B cell (primary cell): ENCODE measurements at regions of chr9 and their contacts with region 1.

Region 1: DNA sequence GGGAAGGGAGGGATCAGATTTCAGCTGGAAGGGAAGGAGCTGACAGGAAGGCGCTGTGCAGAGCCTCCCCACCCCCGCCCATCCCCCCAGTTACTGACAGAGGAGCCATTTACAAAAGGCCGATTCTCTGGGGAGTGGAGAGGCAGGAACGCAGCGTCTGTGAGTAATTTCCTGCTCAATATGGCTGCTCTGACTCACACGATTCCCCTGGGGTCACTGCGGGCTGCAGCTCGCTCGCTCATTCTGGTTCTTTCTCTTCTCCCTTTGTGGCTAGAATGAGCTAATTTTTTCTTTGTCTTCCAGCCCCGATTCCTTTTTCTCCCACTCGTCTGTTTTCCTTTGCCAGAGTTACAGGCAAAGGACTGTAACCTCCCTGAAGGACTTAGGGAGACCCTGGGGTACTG is 28.8 kb downstream of the PTPA start:
- DNase-seq: peak; percentile 95
- ATAC-seq: peak; percentile 83
- H3K4me3 ChIP-seq: peak overlapping the region; percentile 43 to 64 (median 57)
- H3K4me3 Mint-ChIP-seq: peak overlapping the region; percentile 90
- H3K27ac ChIP-seq: peak overlapping the region; percentile 97 to 100
- H3K27ac Mint-ChIP-seq: peak overlapping the region; percentile 94
- H3K4me1 ChIP-seq: peaks cover 43 to 50% of the 10 kb centered on the region in 2 donors
- H3K4me1 Mint-ChIP-seq: peaks cover 47% of the 10 kb centered on the region
- H3K27me3 ChIP-seq: no peaks in the 10 kb centered on the region
- H3K27me3 Mint-ChIP-seq: no peaks in the 10 kb centered on the region
- CTCF ChIP-seq: no peak

Region 2: GRCh38 chr9:129080602-129081387 is 59.2 kb before region 1 on chr9 and contains the start of gene DOLPP1:
- CTCF ChIA-PET with region 1: interaction called, 3 read pairs
- POLR2A ChIA-PET with region 1: no interaction called
- intact Hi-C with region 1: loop called (anchors 2 kb)
- DNase-seq: peak; percentile 99
- ATAC-seq: peak; percentile 92
- H3K4me3 ChIP-seq: peak within 1 kb of the TSS; percentile 67 to 90 (median 75)
- H3K4me3 Mint-ChIP-seq: peak within 1 kb of the TSS; percentile 91
- H3K27ac ChIP-seq: peak within 1 kb of the TSS; percentile 42 to 79
- H3K27ac Mint-ChIP-seq: peak within 1 kb of the TSS; percentile 88
- H3K4me1 ChIP-seq: peaks cover 16 to 20% of the 10 kb centered on the region in 2 donors
- H3K4me1 Mint-ChIP-seq: peaks cover 23% of the 10 kb centered on the region
- H3K27me3 ChIP-seq: no peaks in the 10 kb centered on the region
- H3K27me3 Mint-ChIP-seq: no peaks in the 10 kb centered on the region
- CTCF ChIP-seq: no peak
- total RNA-seq, gene DOLPP1: 4.7 and 7.1 TPM in 2 replicates

Region 3: DNA sequence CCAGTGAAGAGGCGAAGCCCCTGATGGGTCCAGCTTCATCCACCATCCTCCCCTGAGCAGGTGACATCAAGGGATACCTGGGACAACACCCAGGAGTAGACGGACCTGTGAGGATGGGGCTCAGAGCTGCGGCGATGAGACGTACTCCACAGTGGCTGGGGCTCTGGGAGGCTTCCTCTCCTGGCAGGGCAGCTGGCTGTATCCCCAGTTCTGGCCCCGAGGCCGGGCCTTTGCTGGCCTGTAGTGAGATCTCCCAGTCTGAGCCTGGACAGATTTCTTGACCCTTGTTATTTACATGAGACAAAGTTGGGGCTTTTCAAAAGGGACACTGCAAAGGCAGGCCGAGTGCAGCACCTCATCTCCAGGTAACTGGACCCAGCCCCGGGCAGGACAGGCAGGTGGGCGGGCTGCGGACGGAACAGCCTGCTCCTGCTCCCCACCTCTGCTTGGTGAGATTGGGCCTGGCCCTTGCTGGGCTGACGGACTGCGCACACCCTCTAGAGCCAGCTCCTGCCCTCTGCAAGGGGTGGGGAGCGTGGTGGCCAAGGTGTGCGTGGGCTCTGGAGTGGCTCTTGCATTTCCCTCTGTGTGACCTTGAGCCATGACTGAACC is 15.0 kb after region 1 on chr9:
- CTCF ChIA-PET with region 1: interaction called, 24 read pairs
- POLR2A ChIA-PET with region 1: no interaction called
- intact Hi-C with region 1: no loop called
- DNase-seq: no peak
- ATAC-seq: no peak
- H3K4me3 ChIP-seq: no peak overlapping the region
- H3K4me3 Mint-ChIP-seq: no peak overlapping the region
- H3K27ac ChIP-seq: no peak overlapping the region
- H3K27ac Mint-ChIP-seq: no peak overlapping the region
- H3K4me1 ChIP-seq: no peaks in the 10 kb centered on the region
- H3K4me1 Mint-ChIP-seq: no peaks in the 10 kb centered on the region
- H3K27me3 ChIP-seq: no peaks in the 10 kb centered on the region
- H3K27me3 Mint-ChIP-seq: no peaks in the 10 kb centered on the region
- CTCF ChIP-seq: no peak

Region 4: DNA sequence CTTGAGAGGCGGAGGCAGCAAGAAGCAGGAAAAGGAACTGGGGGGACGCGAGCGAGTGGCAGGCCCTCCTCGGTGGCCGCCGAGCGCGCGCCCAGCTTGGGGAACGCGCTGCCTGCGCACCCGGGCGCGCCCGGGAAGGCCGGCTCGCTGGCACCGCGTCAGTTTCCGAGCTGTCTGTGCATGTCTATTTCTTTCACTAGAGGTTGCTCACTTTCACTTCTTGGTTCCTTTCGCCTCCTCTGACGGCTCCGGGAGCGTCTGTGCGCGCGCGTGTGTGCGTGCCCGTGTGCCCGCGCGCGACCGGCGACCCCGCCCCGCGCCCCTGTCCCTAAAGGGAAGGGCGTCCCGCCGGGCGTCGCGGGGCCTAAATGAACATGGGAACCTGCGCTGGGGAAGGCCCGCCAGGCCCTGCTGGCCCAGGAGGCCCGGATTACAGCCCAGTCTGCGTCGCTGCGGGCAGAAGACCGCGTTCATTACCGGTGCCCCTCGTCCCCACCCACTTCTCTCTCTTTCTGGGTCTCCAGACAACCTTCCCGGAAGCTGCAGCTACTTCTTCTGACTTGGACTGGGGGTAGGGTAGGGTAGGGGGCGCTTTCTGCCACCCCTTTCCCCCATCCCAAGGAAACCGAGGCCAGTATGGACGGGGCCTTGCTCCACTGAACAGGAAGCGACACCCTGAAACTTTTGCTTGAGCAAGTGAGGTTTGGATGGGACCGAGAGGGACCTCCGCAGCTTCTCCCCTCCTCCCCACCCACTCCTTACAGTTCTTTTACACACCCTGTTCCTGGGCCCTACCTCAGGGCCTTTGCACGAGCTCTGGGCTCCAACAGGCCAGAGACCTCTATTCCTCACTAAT is 243.8 kb after region 1 on chr9:
- CTCF ChIA-PET with region 1: interaction called, 16 read pairs
- POLR2A ChIA-PET with region 1: interaction called, 4 read pairs
- intact Hi-C with region 1: loop called (anchors 1 kb)
- DNase-seq: peak; percentile 94
- ATAC-seq: peak; percentile 88
- H3K4me3 ChIP-seq: peak overlapping the region; percentile 12 to 82 (median 68)
- H3K4me3 Mint-ChIP-seq: peak overlapping the region; percentile 86
- H3K27ac ChIP-seq: peak overlapping the region; percentile 90 to 96
- H3K27ac Mint-ChIP-seq: peak overlapping the region; percentile 97
- H3K4me1 ChIP-seq: peaks cover 17 to 26% of the 10 kb centered on the region in 2 donors
- H3K4me1 Mint-ChIP-seq: peaks cover 21% of the 10 kb centered on the region
- H3K27me3 ChIP-seq: peaks cover 0 to 7% (median 0%) of the 10 kb centered on the region in 4 experiments
- H3K27me3 Mint-ChIP-seq: peaks cover 3% of the 10 kb centered on the region
- CTCF ChIP-seq: no peak

Region 5: GRCh38 chr9:129487642-129488409 is 347.8 kb after region 1 on chr9:
- CTCF ChIA-PET with region 1: interaction called, 3 read pairs
- POLR2A ChIA-PET with region 1: no interaction called
- intact Hi-C with region 1: loop called (anchors 2 kb)
- DNase-seq: peak; percentile 69
- ATAC-seq: peak; percentile 13
- H3K4me3 ChIP-seq: peak overlapping the region; percentile 38 to 62 (median 49)
- H3K4me3 Mint-ChIP-seq: peak overlapping the region; percentile 89
- H3K27ac ChIP-seq: peak overlapping the region in 1 of 2 donors; percentile 63
- H3K27ac Mint-ChIP-seq: peak overlapping the region; percentile 90
- H3K4me1 ChIP-seq: peaks cover 24 to 28% of the 10 kb centered on the region in 2 donors
- H3K4me1 Mint-ChIP-seq: peaks cover 35% of the 10 kb centered on the region
- H3K27me3 ChIP-seq: peaks cover 0 to 38% (median 9%) of the 10 kb centered on the region in 4 experiments
- H3K27me3 Mint-ChIP-seq: peaks cover 15% of the 10 kb centered on the region
- CTCF ChIP-seq: no peak

Region 6: GRCh38 chr9:129641746-129642513 is 501.9 kb after region 1 on chr9 and contains the start of gene ASB6:
- CTCF ChIA-PET with region 1: interaction called, 5 read pairs
- POLR2A ChIA-PET with region 1: no interaction called
- intact Hi-C with region 1: loop called (anchors 1 kb)
- DNase-seq: peak; percentile 96
- ATAC-seq: peak; percentile 95
- H3K4me3 ChIP-seq: peak within 1 kb of the TSS; percentile 61 to 91 (median 84)
- H3K4me3 Mint-ChIP-seq: peak within 1 kb of the TSS; percentile 87
- H3K27ac ChIP-seq: peak within 1 kb of the TSS; percentile 54 to 86
- H3K27ac Mint-ChIP-seq: peak within 1 kb of the TSS; percentile 91
- H3K4me1 ChIP-seq: peaks cover 12 to 17% of the 10 kb centered on the region in 2 donors
- H3K4me1 Mint-ChIP-seq: peaks cover 26% of the 10 kb centered on the region
- H3K27me3 ChIP-seq: no peaks in the 10 kb centered on the region
- H3K27me3 Mint-ChIP-seq: no peaks in the 10 kb centered on the region
- CTCF ChIP-seq: peak; percentile 100
- total RNA-seq, gene ASB6: 24.8 and 27.7 TPM in 2 replicates